ENCODE measurements at regions of chrX and their contacts with region 1.

Region 1: DNA sequence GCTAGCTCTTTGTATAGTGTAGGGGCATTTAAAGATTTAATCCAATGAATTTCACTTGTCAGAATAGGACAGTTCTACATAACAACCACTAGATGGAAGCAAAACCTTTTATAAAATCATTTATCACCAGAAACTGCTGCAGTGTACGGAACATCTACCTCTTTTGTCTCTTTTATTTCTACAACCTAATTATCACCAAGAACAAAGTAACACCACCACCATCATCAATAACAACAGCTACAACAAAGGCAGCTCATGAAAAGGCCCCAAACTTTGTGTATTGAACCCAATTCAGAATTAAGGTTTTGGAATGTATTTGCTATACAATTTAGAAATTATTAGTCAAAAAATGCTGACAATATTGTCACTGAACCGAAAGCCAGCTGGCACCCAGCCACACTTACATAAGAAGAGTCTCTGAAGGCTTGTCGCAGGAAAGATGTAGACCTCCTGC is 260.9 kb upstream of the RPS6KA3 start:
- DNase-seq: no peak
- H3K4me3 ChIP-seq: no peak overlapping the region
- H3K27ac ChIP-seq: no peak overlapping the region
- H3K4me1 ChIP-seq: peaks cover 4 to 19% (median 10%) of the 10 kb centered on the region in 4 donors
- H3K27me3 ChIP-seq: no peaks in the 10 kb centered on the region
- CTCF ChIP-seq: peak; percentile 54 to 73 (median 62)
- EP300 ChIP-seq: no peak
- POLR2A ChIP-seq: no peak

Region 2: DNA sequence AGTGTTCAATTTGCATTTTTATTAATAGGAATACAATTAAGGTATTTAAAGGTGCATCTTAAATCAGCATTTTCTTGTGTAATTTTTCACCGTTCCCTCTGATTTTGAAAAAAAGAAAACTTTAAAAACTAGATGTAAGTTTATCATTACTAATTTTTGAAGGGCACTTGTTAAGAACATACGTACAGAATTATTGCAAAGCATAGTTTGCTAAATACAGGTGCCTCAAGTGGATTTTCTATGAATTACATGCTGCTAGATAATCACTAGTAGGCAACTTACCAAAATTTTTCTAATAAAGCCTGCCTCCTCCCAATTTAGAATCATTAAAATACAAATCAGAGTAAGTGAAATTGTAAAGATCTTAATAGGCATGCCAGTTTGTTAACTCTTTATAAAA is 855.1 kb after region 1 on chrX:
- intact Hi-C with region 1: loop called (anchors 10 kb)
- DNase-seq: no peak
- H3K4me3 ChIP-seq: no peak overlapping the region
- H3K27ac ChIP-seq: no peak overlapping the region
- H3K4me1 ChIP-seq: peaks cover 0 to 12% (median 4%) of the 10 kb centered on the region in 4 donors
- H3K27me3 ChIP-seq: no peaks in the 10 kb centered on the region
- CTCF ChIP-seq: peak in 2 of 3 experiments; percentile 21 to 53
- EP300 ChIP-seq: no peak
- POLR2A ChIP-seq: no peak

Region 3: DNA sequence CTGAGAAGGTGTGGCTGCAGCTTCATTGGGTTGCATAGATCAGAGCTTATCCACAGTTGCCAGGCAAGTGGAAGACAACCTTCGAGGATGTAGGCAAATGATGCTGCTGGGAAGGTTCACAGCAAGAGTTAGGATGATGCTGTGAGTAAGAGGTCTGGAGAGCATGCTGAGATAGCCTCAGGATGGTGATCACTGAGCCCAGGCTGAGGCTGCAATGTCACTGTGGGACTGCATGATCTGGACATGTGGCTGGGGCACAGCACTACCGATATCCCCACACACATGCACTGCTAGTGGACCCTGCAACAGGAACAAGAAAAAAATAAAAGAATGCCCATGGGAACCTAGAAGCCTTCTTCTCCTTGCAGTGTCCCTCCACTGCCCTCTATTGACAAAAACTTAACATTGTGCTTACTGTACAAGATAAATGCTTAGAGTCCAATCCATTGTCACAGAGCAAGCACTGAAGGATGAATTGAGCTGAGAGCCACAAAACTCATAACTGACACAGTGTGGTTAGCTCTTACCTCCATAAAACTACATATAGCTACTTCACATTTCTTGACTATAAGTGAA is 952.2 kb after region 1 on chrX:
- intact Hi-C with region 1: loop called (anchors 5 kb)
- DNase-seq: no peak
- H3K4me3 ChIP-seq: no peak overlapping the region
- H3K27ac ChIP-seq: no peak overlapping the region
- H3K4me1 ChIP-seq: no peaks in the 10 kb centered on the region
- H3K27me3 ChIP-seq: no peaks in the 10 kb centered on the region
- CTCF ChIP-seq: peak; percentile 46 to 61 (median 47)
- EP300 ChIP-seq: no peak
- POLR2A ChIP-seq: no peak

Region 4: GRCh38 chrX:21745756-21746155 is 1218.2 kb after region 1 on chrX:
- intact Hi-C with region 1: loop called (anchors 5 kb)
- DNase-seq: no peak
- H3K4me3 ChIP-seq: no peak overlapping the region
- H3K27ac ChIP-seq: no peak overlapping the region
- H3K4me1 ChIP-seq: peaks cover 0 to 17% (median 5%) of the 10 kb centered on the region in 4 donors
- H3K27me3 ChIP-seq: no peaks in the 10 kb centered on the region
- CTCF ChIP-seq: peak; percentile 43 to 54 (median 53)
- EP300 ChIP-seq: no peak
- POLR2A ChIP-seq: no peak

Measured in esophagus muscularis mucosa (tissue), 4 donors.